ENCODE measurements at regions of chr2 and their contacts with region 1.

Region 1: GRCh38 chr2:25606892-25607291 is 66.5 kb downstream of the DTNB start:
- DNase-seq: no peak
- H3K4me3 Mint-ChIP-seq: no peak overlapping the region
- H3K27ac Mint-ChIP-seq: no peak overlapping the region
- H3K4me1 Mint-ChIP-seq: peaks cover 17% of the 10 kb centered on the region
- H3K27me3 Mint-ChIP-seq: no peaks in the 10 kb centered on the region

Region 2: GRCh38 chr2:25586726-25587144 is 20.2 kb before region 1 on chr2:
- intact Hi-C with region 1: loop called (anchors 2 kb)
- DNase-seq: no peak
- H3K4me3 Mint-ChIP-seq: peak overlapping the region; percentile 67
- H3K27ac Mint-ChIP-seq: peak overlapping the region; percentile 96
- H3K4me1 Mint-ChIP-seq: peaks cover 28% of the 10 kb centered on the region
- H3K27me3 Mint-ChIP-seq: no peaks in the 10 kb centered on the region

Region 3: DNA sequence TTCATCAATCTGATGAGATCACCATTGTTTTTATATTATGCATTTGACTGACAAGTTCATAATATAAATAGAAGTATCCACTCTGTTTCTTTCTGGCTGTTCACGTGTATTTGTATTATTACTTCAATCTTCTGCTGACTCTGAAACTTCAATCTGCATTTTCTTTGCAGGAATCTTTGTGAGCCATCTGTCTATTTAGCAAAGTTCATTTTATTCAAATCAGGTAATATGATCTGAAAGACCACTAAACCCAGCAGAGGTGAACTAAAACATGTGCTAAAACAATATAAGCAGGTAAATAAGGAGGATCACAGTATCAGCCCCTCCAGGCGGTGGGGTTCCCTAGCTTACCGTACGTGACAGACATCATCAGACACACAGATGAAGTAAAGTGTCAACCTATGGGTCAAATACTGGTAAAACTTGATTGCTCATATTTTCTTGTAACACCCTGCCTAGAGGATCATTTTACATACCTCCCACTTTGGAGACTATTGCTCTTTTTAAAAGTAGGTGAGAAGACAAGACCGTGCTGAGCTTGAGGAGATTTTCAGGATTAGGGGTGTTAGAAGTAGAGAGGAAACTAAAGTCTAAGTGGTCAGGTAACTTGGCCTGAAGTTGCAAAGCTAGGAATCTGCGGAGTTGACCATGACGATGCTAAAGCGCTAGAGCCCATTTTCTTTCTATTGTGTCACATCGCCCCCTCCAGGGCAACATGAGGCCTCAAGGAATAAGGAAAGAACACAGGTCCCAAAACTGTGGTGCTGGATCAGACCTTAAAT is 57.5 kb after region 1 on chr2:
- intact Hi-C with region 1: loop called (anchors 1 kb)
- DNase-seq: no peak
- H3K4me3 Mint-ChIP-seq: peak overlapping the region; percentile 1
- H3K27ac Mint-ChIP-seq: no peak overlapping the region
- H3K4me1 Mint-ChIP-seq: peaks cover 18% of the 10 kb centered on the region
- H3K27me3 Mint-ChIP-seq: no peaks in the 10 kb centered on the region

Region 4: DNA sequence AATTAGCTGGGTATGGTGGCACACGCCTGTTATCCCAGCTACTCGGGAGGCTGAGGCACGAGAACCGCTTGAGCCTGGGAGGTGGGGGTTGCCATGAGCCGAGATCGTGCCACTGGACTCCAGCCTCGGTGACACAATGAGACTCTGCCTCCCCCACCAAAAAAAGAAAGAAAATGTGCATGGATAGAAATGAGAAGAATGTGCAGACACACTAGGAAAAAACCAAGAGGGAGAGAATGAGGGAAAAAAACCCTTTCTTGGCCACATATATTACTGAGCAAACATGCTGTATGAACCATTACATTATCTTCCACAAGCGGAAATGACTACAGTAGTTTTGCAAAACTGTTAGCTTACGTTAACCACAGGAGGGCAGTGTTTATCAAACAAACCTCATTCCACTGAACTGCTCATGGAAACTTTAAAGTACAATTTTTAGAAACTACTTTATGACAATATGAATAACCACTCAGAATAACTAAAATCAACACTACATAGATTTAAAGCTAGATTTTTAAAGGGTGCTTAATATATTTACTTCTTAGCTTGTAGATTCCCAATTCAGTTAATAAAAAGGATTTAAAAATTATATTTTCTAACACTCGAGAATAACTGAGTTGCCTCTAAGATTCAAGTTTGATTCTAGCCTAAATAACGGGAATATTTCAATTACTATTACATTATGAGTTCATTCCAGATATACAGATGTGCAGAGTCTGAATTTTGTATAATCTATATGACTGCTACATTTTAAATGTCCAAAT is 245.0 kb after region 1 on chr2:
- intact Hi-C with region 1: loop called (anchors 10 kb)
- DNase-seq: peak; percentile 25
- H3K4me3 Mint-ChIP-seq: peak overlapping the region; percentile 75
- H3K27ac Mint-ChIP-seq: peak overlapping the region; percentile 85
- H3K4me1 Mint-ChIP-seq: peaks cover 47% of the 10 kb centered on the region
- H3K27me3 Mint-ChIP-seq: no peaks in the 10 kb centered on the region

Region 5: GRCh38 chr2:25885933-25886332 is 279.0 kb after region 1 on chr2:
- intact Hi-C with region 1: loop called (anchors 10 kb)
- DNase-seq: no peak
- H3K4me3 Mint-ChIP-seq: no peak overlapping the region
- H3K27ac Mint-ChIP-seq: no peak overlapping the region
- H3K4me1 Mint-ChIP-seq: peaks cover 10% of the 10 kb centered on the region
- H3K27me3 Mint-ChIP-seq: peaks cover 8% of the 10 kb centered on the region